Pancreas (tissue), 10 donors: ENCODE measurements at regions of chr6 and their contacts with region 1.

Region 1: GRCh38 chr6:165850434-165851019 is 187.5 kb upstream of the PDE10A start:
- DNase-seq: peak; percentile 35 to 90 (median 72)
- ATAC-seq: peak; percentile 70 to 96 (median 89)
- H3K4me3 ChIP-seq: no peak overlapping the region
- H3K27ac ChIP-seq: no peak overlapping the region
- H3K4me1 ChIP-seq: peaks cover 0 to 7% (median 0%) of the 10 kb centered on the region in 3 donors
- H3K27me3 ChIP-seq: peaks cover 0 to 18% (median 4%) of the 10 kb centered on the region in 4 donors
- CTCF ChIP-seq: peak; percentile 89 to 98 (median 94)

Region 2: DNA sequence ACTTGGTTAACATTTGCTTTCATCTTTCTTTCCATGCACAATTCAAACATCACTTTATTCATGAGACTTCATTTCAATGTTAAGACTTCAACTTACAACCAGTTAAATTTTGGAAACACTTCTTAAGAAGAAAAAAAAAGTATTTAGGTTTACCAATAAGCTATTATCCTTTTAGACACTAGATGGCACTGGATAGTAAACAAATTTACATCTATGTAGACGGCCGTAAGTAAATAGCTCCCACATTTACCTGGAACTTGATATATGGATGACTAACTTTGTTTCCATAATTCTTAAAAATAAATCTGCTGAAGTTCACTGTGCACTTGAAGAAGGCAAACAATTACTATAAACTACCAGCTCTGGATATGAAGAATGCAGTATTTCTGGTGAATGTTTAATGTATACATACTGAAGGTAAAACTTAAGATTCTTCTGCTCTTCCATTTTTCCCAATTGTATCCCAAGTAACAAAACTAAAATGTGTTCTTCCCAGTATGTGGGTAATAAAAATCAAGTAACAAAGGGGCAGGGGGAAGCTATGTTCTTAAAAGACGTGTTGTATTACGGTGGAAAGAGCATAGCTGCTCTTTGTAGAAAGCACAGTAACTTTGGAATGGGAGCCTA is 410.5 kb before region 1 on chr6:
- intact Hi-C with region 1: loop called in 2 of 3 experiments (anchors 5 to 10 kb)
- DNase-seq: no peak
- ATAC-seq: peak in 3 of 4 donors; percentile 72 to 76 (median 73)
- H3K4me3 ChIP-seq: no peak overlapping the region
- H3K27ac ChIP-seq: no peak overlapping the region
- H3K4me1 ChIP-seq: no peaks in the 10 kb centered on the region
- H3K27me3 ChIP-seq: peaks cover 0 to 5% (median 0%) of the 10 kb centered on the region in 4 donors
- CTCF ChIP-seq: peak in 3 of 4 donors; percentile 30 to 44 (median 40)

Region 3: GRCh38 chr6:165729307-165729936 is 121.1 kb before region 1 on chr6:
- intact Hi-C with region 1: loop called in 2 of 3 experiments (anchors 5 to 10 kb)
- DNase-seq: peak in 1 of 6 donors; percentile 43
- ATAC-seq: peak in 3 of 4 donors; percentile 55 to 74 (median 65)
- H3K4me3 ChIP-seq: no peak overlapping the region
- H3K27ac ChIP-seq: no peak overlapping the region
- H3K4me1 ChIP-seq: no peaks in the 10 kb centered on the region
- H3K27me3 ChIP-seq: no peaks in the 10 kb centered on the region
- CTCF ChIP-seq: peak; percentile 44 to 78 (median 60)